Breast epithelium (tissue), 4 donors: ENCODE measurements at regions of chr12 and their contacts with region 1.

Region 1: DNA sequence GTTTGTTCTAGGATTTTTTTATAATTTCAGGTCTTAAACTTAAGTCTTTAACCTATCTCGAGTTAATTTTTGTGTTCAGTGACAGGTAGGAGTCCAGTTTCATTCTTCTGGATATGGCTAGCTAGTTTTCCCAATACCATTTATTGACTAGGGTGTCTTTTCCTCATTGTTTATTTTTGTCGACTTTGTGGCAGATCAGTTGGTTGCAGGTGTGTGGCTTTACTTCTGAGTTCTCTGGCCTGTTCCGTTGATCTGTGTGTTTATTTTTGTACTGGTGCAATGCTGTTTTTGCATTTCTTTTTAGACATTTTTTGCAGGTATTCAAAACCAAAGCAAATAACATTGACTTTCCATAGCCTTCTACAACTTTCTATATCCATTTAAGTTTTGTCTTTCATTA is 121.7 kb downstream of the ETNK1 start:
- DNase-seq: no peak
- H3K4me3 ChIP-seq: no peak overlapping the region
- H3K27ac ChIP-seq: no peak overlapping the region
- H3K4me1 ChIP-seq: no peaks in the 10 kb centered on the region
- H3K27me3 ChIP-seq: no peaks in the 10 kb centered on the region
- CTCF ChIP-seq: no peak
- POLR2A ChIP-seq: no peak

Region 2: DNA sequence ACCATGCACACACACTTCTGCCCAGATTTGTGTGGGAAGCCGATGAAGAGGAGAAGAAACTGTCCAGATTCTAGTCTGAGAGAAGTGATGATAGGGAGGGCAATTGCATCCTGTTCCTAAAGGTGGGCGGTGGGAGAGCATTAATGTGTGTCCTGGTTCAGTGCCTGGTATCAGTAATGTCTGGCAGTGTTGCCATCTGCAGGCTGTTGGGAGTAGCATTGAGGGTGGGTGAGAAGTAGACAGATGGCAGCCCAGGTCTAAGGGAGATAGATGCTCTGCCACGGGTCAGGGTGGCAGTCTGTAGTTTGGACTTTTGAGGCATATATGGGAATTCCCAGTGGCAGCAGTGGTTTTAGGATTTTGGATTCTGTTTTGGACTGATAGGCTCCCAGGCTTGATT is 34.6 kb after region 1 on chr12:
- intact Hi-C with region 1: loop called (anchors 2 kb)
- DNase-seq: no peak
- H3K4me3 ChIP-seq: no peak overlapping the region
- H3K27ac ChIP-seq: no peak overlapping the region
- H3K4me1 ChIP-seq: no peaks in the 10 kb centered on the region
- H3K27me3 ChIP-seq: no peaks in the 10 kb centered on the region
- CTCF ChIP-seq: no peak
- POLR2A ChIP-seq: no peak